ENCODE measurements at regions of chr1 and their contacts with region 1.

Region 1: GRCh38 chr1:168439456-168440375 is 104.1 kb downstream of the XCL2 start:
- DNase-seq: peak; percentile 68
- CTCF ChIP-seq: peak; percentile 79

Region 2: DNA sequence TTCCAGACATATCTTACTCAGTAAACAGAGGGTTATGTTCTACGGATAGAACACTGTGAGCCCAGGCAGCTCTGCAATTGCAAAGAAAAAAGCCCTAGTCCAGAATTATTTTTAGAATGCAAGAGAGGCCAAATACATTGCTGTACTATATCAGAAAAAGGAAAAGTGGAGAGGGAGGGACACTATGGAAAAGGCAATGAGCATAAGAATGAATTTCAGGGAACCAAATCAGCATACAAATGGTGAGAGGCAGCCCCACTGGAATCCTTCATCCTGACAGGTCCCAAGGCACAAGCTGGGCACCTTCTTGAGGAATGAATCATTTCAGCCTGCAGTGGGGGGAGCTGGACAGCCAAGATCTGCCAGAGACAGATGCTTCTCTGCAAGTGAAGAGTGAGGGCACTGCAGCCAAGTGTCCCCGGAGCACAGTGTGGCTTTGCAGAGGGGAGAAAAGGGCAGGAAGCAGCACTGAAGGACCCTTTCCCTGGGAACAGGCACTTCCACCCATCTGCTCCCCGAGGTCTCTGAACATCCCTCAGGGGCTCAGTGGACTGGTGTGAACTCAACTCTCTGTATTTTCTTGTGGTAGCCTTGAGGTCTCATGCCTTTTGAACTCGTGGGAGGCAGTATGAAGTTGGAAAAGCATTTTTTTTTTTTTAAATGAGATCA is 11.5 kb before region 1 on chr1:
- CTCF ChIA-PET with region 1: interaction called, 21 read pairs
- POLR2A ChIA-PET with region 1: no interaction called
- DNase-seq: no peak
- CTCF ChIP-seq: no peak

Region 3: DNA sequence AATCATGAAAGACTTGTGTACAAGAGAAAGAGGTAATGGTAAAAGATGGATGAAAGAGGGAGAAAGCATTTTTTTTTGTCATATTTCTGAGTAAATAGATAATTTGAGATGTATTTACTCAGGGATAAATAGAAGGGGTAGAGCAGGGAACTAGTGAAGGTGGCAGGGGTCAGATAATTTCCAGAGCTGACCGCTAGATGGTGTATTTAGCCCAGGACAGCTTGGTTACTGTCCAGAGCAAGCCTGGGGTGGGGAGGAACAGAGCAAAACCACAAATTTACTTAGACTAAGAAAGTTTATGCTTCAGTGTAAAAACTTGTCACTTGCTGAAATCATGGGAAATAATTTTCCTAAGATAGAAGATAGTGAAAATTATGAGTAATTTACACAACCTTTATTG is 12.6 kb after region 1 on chr1:
- CTCF ChIA-PET with region 1: interaction called, 29 read pairs
- POLR2A ChIA-PET with region 1: no interaction called
- DNase-seq: no peak
- CTCF ChIP-seq: peak; percentile 19

Measured in GM10248 (cell line).